CD8-positive, alpha-beta memory T cell (primary cell): ENCODE measurements at regions of chr1 and their contacts with region 1.

Region 1: DNA sequence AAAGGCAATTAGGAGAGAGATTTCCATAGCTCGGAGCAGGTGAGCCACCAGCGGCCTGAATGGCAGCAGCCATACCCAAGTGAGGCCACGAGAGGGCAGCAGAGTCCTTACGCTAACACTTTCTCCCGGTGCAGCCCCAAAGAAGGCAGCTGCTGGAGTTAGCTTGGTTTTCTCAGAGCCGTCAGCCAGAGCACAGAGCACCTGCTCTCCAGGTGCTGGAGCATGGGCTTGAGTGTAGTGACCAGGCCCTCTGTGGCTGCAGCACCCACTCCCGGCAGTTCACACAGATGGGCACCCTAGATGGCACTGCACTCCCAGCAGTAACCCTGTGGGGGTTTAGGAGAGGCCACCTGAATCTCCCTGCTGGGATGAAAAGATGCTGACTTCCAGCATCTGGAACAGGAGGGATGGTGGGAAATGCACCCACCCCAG is 45.8 kb downstream of the TMCC2 start:
- DNase-seq: peak; percentile 74 to 87 (median 76)
- H3K4me3 ChIP-seq: peak overlapping the region; percentile 33
- H3K4me3 Mint-ChIP-seq: peak overlapping the region; percentile 33 to 79 (median 56)
- H3K27ac ChIP-seq: no peak overlapping the region
- H3K27ac Mint-ChIP-seq: peak overlapping the region in 5 of 8 donors; percentile 14 to 75 (median 71)
- H3K4me1 ChIP-seq: peaks cover 40% of the 10 kb centered on the region
- H3K4me1 Mint-ChIP-seq: peaks cover 23 to 45% (median 31%) of the 10 kb centered on the region in 3 donors
- H3K27me3 ChIP-seq: no peaks in the 10 kb centered on the region
- H3K27me3 Mint-ChIP-seq: peaks cover 0 to 2% of the 10 kb centered on the region in 2 donors

Region 2: DNA sequence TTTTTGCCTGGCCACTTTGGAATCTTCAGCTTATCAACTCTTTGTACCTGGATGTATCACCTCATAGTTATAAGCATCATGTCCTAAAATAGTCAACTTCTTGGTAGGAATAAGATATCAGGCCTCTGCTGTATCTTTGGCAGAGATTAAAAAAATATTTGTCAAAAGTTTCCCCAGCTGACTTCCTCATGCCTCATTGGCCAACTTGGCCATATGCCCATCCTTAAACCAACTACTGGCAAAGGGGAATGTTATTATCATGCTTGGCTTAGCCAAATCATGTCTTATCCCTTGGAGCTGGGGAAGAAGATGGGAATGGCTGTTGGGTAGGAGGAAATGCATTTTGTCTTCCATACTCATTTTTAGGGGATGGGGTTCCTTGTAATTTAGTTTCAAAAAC is 379.5 kb before region 1 on chr1:
- CTCF ChIA-PET with region 1: no interaction called
- POLR2A ChIA-PET with region 1: no interaction called
- DNase-seq: no peak
- H3K4me3 ChIP-seq: no peak overlapping the region
- H3K4me3 Mint-ChIP-seq: no peak overlapping the region
- H3K27ac ChIP-seq: no peak overlapping the region
- H3K27ac Mint-ChIP-seq: no peak overlapping the region
- H3K4me1 ChIP-seq: no peaks in the 10 kb centered on the region
- H3K4me1 Mint-ChIP-seq: no peaks in the 10 kb centered on the region
- H3K27me3 ChIP-seq: no peaks in the 10 kb centered on the region
- H3K27me3 Mint-ChIP-seq: peaks cover 26 to 53% of the 10 kb centered on the region in 2 donors

Region 3: GRCh38 chr1:205227584-205228006 is 46.0 kb before region 1 on chr1 and contains the start of gene TMCC2:
- CTCF ChIA-PET with region 1: interaction called, 13 read pairs
- POLR2A ChIA-PET with region 1: no interaction called
- DNase-seq: peak; percentile 69 to 88 (median 80)
- H3K4me3 ChIP-seq: peak within 1 kb of the TSS; percentile 74
- H3K4me3 Mint-ChIP-seq: peak within 1 kb of the TSS; percentile 89 to 97 (median 95)
- H3K27ac ChIP-seq: no peak within 1 kb of the TSS
- H3K27ac Mint-ChIP-seq: peak within 1 kb of the TSS; percentile 69 to 97 (median 84)
- H3K4me1 ChIP-seq: peaks cover 17% of the 10 kb centered on the region
- H3K4me1 Mint-ChIP-seq: peaks cover 21 to 29% (median 27%) of the 10 kb centered on the region in 3 donors
- H3K27me3 ChIP-seq: no peaks in the 10 kb centered on the region
- H3K27me3 Mint-ChIP-seq: peaks cover 9% of the 10 kb centered on the region in 2 donors
- total RNA-seq, gene TMCC2: 7.1 to 8.4 TPM

Region 4: DNA sequence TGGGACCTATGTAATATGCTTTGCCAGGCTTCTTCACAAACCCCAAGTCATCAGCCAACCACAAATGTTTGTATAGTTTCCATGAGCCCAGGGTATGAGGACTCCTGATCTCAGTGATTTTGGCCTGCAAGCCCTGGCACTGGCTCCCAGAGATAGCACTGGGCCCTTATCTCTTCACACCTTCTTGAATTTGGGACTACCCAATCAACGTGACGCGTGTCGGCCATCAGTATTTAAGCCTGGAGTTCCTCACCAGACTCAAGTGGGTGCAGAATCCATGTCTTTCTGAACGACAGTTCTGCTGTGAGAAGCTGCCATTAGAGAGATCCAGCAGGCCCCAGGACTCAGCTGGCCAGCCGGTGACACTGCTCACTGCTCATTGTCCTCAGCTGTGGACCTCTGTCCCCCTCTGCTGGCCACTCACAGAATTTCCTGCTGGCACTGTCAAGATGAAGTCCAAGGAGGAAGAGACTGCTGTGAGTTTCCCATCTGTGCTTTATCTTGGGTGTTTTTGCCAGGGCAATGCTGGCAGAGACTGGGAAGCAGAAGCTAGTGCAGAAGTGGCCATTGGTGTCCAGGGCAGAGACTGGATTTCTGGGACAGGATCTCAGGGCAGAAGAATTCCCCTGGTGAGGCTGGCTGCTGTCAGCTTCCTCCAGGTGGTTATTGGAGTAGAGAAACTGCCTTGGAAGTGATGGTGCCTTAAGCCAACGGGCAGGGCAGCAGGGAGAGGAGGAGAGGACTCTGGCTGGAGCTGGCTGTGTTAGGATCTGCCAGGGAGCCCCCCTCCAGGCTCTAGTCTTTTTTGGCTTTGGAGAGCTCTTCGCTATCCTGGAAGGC is 17.4 kb before region 1 on chr1:
- CTCF ChIA-PET with region 1: interaction called, 22 read pairs
- POLR2A ChIA-PET with region 1: no interaction called
- DNase-seq: peak; percentile 68 to 86 (median 71)
- H3K4me3 ChIP-seq: no peak overlapping the region
- H3K4me3 Mint-ChIP-seq: no peak overlapping the region
- H3K27ac ChIP-seq: no peak overlapping the region
- H3K27ac Mint-ChIP-seq: peak overlapping the region in 1 of 8 donors; percentile 57
- H3K4me1 ChIP-seq: no peaks in the 10 kb centered on the region
- H3K4me1 Mint-ChIP-seq: peaks cover 0 to 2% (median 0%) of the 10 kb centered on the region in 3 donors
- H3K27me3 ChIP-seq: no peaks in the 10 kb centered on the region
- H3K27me3 Mint-ChIP-seq: no peaks in the 10 kb centered on the region

Region 5: DNA sequence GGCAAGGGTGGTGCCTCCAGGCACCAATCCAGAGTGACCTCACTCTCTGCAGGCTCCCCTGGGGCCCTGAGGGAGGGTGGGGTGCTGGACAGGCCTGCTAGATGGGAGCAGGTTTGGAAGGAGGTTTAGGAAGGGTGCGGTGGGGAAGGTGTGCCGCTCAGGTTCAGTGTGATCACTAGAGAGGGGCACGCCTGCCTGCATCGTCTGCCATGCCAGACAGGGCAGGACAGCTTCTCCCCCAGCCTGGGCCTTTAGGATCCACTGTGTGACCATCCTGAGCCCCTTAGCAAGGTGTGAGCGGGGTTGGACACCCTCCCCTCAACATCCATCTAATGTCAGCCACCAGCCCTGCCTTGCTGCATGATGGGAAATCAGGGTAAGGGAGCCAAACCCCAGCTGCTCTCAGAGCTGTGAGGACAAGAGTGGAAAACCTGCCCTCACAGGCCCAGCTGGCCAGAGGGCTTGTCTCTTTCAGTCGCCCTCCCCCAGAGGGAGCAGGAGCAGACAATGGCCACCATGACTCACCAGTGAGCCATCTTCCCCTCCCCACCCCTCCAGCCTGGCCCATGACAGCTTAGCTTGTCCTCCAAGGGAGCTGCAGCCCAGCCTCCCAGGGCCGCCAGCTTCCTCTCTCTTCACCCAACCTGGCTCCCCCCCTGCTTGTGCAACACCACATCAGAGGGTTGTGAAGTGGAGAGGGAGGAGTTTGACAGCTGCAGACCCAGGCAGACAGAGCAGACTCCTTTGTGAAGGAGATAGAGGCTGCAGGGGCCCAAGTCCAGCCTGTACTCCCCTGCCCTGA is 11.0 kb after region 1 on chr1:
- CTCF ChIA-PET with region 1: interaction called, 231 read pairs
- POLR2A ChIA-PET with region 1: interaction called, 45 read pairs
- DNase-seq: peak; percentile 80 to 97 (median 90)
- H3K4me3 ChIP-seq: peak overlapping the region; percentile 80
- H3K4me3 Mint-ChIP-seq: peak overlapping the region; percentile 73 to 87 (median 81)
- H3K27ac ChIP-seq: peak overlapping the region; percentile 7
- H3K27ac Mint-ChIP-seq: peak overlapping the region; percentile 77 to 98 (median 94)
- H3K4me1 ChIP-seq: peaks cover 85% of the 10 kb centered on the region
- H3K4me1 Mint-ChIP-seq: peaks cover 78 to 86% (median 80%) of the 10 kb centered on the region in 3 donors
- H3K27me3 ChIP-seq: no peaks in the 10 kb centered on the region
- H3K27me3 Mint-ChIP-seq: peaks cover 0 to 5% of the 10 kb centered on the region in 2 donors

Region 6: GRCh38 chr1:205294175-205294913 is 20.8 kb after region 1 on chr1:
- CTCF ChIA-PET with region 1: interaction called, 231 read pairs
- POLR2A ChIA-PET with region 1: interaction called, 32 read pairs
- DNase-seq: no peak
- H3K4me3 ChIP-seq: no peak overlapping the region
- H3K4me3 Mint-ChIP-seq: no peak overlapping the region
- H3K27ac ChIP-seq: no peak overlapping the region
- H3K27ac Mint-ChIP-seq: peak overlapping the region in 4 of 8 donors; percentile 11 to 68 (median 18)
- H3K4me1 ChIP-seq: peaks cover 53% of the 10 kb centered on the region
- H3K4me1 Mint-ChIP-seq: peaks cover 55 to 83% (median 69%) of the 10 kb centered on the region in 3 donors
- H3K27me3 ChIP-seq: no peaks in the 10 kb centered on the region
- H3K27me3 Mint-ChIP-seq: no peaks in the 10 kb centered on the region

Region 7: GRCh38 chr1:205321164-205321958 is 47.8 kb after region 1 on chr1 and contains the start of gene NUAK2:
- CTCF ChIA-PET with region 1: interaction called, 1,351 read pairs
- POLR2A ChIA-PET with region 1: interaction called, 32 read pairs
- DNase-seq: peak; percentile 67 to 89 (median 82)
- H3K4me3 ChIP-seq: peak within 1 kb of the TSS; percentile 96
- H3K4me3 Mint-ChIP-seq: peak within 1 kb of the TSS; percentile 93 to 100 (median 96)
- H3K27ac ChIP-seq: peak within 1 kb of the TSS; percentile 48
- H3K27ac Mint-ChIP-seq: peak within 1 kb of the TSS; percentile 84 to 94 (median 89)
- H3K4me1 ChIP-seq: peaks cover 55% of the 10 kb centered on the region
- H3K4me1 Mint-ChIP-seq: peaks cover 59 to 74% (median 74%) of the 10 kb centered on the region in 3 donors
- H3K27me3 ChIP-seq: no peaks in the 10 kb centered on the region
- H3K27me3 Mint-ChIP-seq: peaks cover 0 to 4% of the 10 kb centered on the region in 2 donors
- total RNA-seq, gene NUAK2: 4.5 to 4.7 TPM

Region 8: DNA sequence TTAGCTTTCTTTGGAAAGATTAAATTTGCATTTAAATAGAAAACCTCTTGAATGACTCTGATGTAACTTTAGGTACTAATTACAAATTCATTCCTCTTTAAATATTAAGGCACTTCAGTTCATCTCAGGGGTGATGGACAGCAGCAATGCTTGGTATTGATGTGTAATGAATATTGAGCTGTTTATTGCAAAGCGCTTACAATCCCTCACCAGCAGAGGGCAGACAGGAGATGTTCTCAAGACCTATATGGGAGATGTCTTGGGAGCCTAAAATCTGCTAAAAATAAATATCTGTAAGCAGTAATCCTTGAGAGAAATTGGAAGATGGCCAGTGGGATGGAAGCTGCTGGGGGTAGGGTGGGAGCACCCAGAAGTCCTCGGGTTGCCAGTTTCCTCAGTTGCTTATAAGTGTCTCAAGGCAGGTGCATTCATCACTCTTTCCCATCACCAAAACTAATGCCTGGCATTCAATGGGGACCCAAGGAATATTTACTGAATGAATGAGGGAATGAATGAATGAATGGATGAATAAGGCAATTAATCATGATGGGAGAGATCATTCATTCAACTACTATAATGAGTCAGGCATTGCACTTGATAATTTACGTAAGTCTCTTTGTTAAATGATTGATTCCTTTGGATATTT is 80.8 kb after region 1 on chr1:
- CTCF ChIA-PET with region 1: interaction called, 23 read pairs
- POLR2A ChIA-PET with region 1: interaction called, 3 read pairs
- DNase-seq: peak; percentile 32 to 74 (median 46)
- H3K4me3 ChIP-seq: no peak overlapping the region
- H3K4me3 Mint-ChIP-seq: no peak overlapping the region
- H3K27ac ChIP-seq: no peak overlapping the region
- H3K27ac Mint-ChIP-seq: no peak overlapping the region
- H3K4me1 ChIP-seq: no peaks in the 10 kb centered on the region
- H3K4me1 Mint-ChIP-seq: no peaks in the 10 kb centered on the region
- H3K27me3 ChIP-seq: peaks cover 11% of the 10 kb centered on the region
- H3K27me3 Mint-ChIP-seq: peaks cover 9 to 33% of the 10 kb centered on the region in 2 donors